WTC11 (cell line): ENCODE measurements at regions of chr19 and their contacts with region 1.

Region 1: DNA sequence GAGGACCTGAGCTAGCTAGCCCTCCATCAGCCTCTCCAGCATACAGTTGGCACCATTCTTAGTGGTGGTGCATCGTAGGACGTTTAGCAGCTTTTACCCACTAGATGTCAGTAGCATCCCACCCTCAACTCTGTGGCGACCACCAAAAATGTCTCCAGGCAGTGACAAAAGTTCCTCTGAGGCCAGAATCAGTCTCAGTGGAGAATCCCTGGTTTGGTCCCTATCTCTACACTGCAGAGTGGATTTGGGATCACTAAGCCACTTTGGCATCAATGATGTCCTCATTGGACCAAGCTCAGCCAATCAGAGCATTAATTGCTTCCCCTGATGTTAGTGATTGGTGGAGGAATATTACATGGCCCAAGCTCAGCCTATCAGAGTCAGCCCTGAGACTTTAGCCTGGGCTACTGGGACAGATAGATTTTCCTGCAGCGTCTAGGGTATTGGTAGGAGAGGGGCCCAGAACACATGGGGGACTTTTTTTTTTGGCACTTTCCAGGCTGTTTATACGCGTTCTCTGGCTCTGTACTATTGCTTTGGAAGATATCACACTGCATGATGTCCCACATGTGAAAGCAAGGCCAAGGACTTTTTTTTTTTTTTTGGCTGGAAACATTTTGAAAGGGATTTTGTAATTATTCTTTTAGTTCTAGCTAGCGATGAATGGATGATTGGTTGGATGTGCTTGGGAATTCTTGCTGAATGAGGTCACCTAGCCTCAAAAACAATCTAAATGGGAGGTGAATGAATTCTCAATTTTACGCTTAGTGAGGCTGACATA is 7.0 kb downstream of the TMEM221 start:
- DNase-seq: peak; percentile 41
- ATAC-seq: peak; percentile 88
- H3K4me3 Mint-ChIP-seq: no peak overlapping the region
- H3K27ac Mint-ChIP-seq: no peak overlapping the region
- H3K4me1 Mint-ChIP-seq: no peaks in the 10 kb centered on the region
- H3K27me3 Mint-ChIP-seq: peaks cover 8% of the 10 kb centered on the region
- CTCF ChIP-seq: no peak; the same call in 1 of the 2 replicates

Region 2: GRCh38 chr19:17455308-17456123 is 14.1 kb after region 1 on chr19:
- CTCF ChIA-PET with region 1: interaction called, 21 read pairs
- POLR2A ChIA-PET with region 1: no interaction called
- DNase-seq: peak; percentile 46
- ATAC-seq: peak; percentile 38
- H3K4me3 Mint-ChIP-seq: peak overlapping the region; percentile 59
- H3K27ac Mint-ChIP-seq: no peak overlapping the region
- H3K4me1 Mint-ChIP-seq: peaks cover 14% of the 10 kb centered on the region
- H3K27me3 Mint-ChIP-seq: peaks cover 62% of the 10 kb centered on the region
- CTCF ChIP-seq: no peak